HEK293T (cell line): ENCODE measurements at regions of chr2 and their contacts with region 1.

Region 1: DNA sequence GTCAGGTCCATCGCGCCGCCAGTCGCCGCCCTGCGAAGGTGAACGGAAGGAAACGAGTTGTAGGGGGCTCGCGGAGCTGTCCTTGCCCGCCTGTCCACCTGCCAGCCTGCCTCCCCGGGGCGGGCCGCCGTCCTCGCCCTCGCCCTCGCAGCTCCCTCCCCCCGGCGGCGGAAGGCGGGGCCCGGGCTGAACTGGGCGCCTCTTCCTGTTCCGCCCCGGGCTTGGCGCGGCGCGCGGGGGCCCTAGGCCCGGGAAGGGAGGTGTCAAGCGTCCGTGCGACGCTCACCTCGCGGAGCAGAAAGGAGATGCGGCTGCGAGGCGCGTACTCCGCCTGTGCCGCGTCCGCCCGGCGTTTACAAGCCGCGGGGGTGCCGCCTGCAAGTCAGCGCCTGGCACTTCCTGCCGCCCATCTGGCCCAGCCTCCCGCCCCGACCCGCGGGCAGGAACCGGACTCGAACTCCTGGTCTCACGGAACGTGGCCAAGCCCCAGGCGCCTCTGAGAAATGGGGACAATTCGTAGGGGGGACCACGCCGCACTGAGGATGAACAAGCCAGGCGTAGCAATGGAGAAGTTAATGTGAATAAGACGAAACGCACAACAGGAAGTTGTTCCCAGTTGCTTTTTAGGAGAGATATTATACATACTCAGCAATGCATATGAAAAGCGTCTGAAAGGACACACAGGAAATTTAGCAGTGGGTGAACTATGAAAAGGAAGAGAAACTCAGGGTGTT is at the start of gene CNPPD1:
- DNase-seq: peak; percentile 70

Region 2: DNA sequence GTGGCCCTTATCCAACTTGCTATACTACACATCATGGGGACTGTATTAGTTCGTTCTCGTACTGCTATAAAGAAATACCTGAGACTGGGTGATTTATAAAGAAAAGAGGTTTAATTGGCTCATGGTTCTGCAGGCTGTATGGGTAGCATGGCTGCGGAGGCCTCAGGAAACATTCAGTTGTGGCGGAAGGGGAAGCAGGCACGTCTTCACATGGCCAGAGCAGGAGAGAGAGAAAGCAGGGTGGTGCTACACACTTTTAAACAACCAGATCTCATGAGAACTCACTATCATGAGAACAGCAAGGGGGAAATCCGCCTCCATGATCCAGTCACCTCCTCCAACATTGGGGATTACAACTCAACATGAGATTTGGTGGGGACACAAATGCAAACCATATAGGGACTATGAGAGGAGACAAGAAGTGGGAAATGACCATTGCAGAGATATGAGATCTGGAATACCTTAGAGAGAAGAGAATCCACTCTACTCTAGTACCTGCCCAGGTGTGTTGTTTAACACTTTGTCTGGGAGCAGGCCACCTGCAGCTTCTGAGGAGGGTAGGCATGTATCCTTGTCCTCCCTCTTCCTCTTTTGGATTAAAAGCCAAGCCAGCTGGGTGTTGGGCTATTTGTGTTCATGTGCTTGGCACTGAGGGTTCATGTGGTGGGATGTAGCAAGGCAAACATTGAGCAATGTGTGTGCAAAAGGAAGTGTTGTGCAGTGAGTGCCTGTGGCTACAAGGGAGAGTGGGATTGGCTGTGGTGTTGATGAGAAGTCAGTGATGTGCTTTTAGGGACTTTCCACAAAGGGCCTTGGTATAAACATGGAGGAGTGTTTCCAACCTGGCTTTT is 443.6 kb before region 1 on chr2:
- CTCF ChIA-PET with region 1: no interaction called
- POLR2A ChIA-PET with region 1: no interaction called
- DNase-seq: no peak

Region 3: GRCh38 chr2:219206442-219207253 is 29.7 kb after region 1 on chr2 and contains the start of gene ZFAND2B:
- CTCF ChIA-PET with region 1: interaction called, 3 read pairs
- POLR2A ChIA-PET with region 1: interaction called, 25 read pairs
- DNase-seq: peak; percentile 98

Region 4: GRCh38 chr2:219218732-219219701 is 42.0 kb after region 1 on chr2 and contains the start of gene ABCB6:
- CTCF ChIA-PET with region 1: no interaction called
- POLR2A ChIA-PET with region 1: interaction called, 16 read pairs
- DNase-seq: peak; percentile 65

Region 5: DNA sequence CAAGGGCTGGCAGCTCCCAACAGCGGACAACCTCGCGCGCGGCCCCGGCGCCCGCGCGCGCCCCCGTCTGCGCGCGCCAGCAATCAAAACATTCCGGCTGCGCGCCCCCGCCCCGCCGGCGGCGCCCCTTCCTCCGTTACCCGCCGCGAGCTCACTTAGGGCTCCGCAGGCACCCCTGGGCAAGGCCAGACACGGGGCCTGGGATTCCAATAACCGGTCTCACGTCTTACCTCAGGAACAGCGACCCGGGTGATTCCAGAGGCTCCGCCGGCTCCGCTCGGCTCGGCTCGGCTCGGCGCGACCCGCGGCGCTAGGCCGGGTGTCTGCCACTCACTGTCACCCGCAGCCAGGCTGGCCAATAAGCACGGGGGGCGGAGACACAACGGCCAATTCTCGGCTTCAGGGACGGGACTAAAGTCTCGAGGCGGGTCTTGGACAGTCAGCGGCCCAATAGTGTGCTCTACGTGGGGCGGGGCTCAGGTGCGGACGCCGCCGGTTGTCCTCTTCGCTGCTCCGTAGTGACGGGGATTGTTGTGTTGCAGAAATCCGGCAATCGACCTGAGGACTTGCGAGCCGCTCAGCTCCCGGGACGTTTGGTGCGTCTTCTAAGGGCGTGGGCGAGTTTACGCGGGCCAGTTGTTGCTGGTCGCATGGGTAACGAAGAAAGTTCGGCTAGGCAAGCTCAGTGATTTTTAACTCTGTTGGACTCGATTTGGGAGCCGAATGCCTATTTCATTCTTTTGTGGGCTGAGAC is 52.5 kb after region 1 on chr2 and contains the starts of genes ANKZF1 and ATG9A:
- CTCF ChIA-PET with region 1: no interaction called
- POLR2A ChIA-PET with region 1: interaction called, 17 read pairs
- DNase-seq: peak; percentile 98

Region 6: DNA sequence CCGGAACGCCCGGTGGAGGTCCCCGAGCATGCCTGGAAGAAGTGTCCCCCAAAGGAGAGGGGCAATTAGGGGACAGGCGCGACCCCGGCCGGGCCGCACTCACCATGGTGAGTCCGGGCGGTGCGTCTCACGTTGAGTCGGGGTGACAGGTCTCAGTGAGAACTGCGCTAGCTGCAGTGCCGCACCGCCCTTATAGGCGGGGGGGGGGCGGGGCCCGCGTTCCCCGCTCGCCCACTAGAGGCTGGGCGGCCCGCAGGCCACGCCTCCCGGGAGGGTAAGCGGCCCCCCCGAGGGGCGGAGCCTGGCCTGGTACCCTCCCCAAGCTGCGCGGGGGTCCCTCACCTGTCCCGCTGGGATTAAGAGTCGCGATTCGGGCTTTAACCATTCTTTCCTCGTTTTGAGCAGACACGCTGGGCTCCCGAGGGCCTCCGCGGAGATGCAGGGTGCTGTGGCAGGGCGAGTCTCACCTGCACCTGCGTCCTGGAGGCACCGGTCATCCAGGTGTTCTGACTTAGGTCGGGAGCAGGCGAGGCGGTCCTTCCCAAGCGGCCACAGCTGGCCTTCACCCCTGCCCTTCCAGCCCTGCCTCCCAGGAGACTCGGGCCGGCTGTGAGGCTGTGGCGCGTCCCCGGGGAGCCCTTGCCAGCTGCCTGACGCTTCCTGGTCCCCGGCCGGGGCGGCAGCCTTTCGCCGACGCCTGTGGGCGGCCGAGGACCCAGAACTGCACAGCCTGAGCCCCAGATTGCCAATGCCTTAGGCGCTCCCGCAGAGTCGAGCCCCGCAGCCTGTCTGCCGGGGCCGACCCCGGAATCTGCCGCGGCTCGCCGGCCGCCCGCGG is 77.0 kb after region 1 on chr2 and contains the start of gene TUBA4A:
- CTCF ChIA-PET with region 1: no interaction called
- POLR2A ChIA-PET with region 1: no interaction called
- DNase-seq: peak; percentile 90

Region 7: GRCh38 chr2:219314804-219315468 is 138.0 kb after region 1 on chr2:
- CTCF ChIA-PET with region 1: no interaction called
- POLR2A ChIA-PET with region 1: no interaction called
- DNase-seq: no peak